H1 (cell line): ENCODE measurements at regions of chr19 and their contacts with region 1.

Region 1: DNA sequence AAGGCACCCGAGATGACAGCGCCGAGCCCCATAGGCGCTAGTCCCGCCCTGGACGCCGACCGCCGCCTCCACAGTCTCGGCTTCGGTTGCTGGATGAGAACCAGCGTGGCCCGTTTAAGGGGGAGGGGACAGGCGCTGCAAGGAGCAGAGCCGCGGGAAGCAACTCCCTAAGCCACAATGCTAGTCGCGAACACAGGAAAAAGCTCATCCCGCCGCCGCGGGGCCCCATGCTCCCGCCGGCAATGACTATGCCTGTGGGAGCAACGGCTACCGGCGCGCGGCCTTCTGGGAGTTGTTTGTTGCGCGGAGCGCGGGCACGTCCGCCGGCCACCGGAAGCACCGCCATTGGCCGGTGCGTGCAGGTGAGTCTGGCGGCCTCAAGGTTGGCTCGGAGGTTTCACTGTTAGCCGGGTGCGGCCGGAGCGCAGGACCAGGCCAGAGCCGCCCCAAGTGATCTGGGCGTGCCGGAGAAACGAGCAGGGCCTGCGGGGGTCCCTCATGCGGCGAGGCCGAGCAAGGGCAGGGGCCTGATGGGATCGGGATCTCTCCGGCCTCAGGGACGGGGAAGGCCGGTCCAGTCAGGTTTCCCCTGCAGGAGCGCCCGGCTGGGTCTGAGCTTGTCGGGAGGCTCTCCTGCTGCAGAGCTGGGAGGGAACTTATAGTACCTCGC is at the start of gene ZNF544:
- DNase-seq: peak in 1 of 2 experiments; percentile 88
- H3K4me3 ChIP-seq: peak within 1 kb of the TSS; percentile 81 to 96 (median 90)
- H3K27ac ChIP-seq: peak within 1 kb of the TSS; percentile 97
- H3K4me1 ChIP-seq: peaks cover 3 to 14% (median 5%) of the 10 kb centered on the region in 4 experiments
- H3K27me3 ChIP-seq: no peaks in the 10 kb centered on the region
- CTCF ChIP-seq: peak in 2 of 3 experiments; percentile 1; a peak in 2 of 4 replicates
- EP300 ChIP-seq: no peak
- POLR2A ChIP-seq: peak; percentile 87 to 90
- RAD21 ChIP-seq: no peak
- total RNA-seq, gene ZNF544: 54.5 and 60.8 TPM in 2 replicates

Region 2: GRCh38 chr19:58182989-58183816 is 45.5 kb before region 1 on chr19 and contains the start of gene ZNF274:
- CTCF ChIA-PET with region 1: no interaction called
- POLR2A ChIA-PET with region 1: interaction called, 25 read pairs
- DNase-seq: peak; percentile 84 to 97
- H3K4me3 ChIP-seq: peak within 1 kb of the TSS; percentile 94 to 97 (median 96)
- H3K27ac ChIP-seq: peak within 1 kb of the TSS; percentile 99
- H3K4me1 ChIP-seq: no peaks in the 10 kb centered on the region; a peak in 1 of 7 replicates
- H3K27me3 ChIP-seq: no peaks in the 10 kb centered on the region
- CTCF ChIP-seq: no peak
- EP300 ChIP-seq: no peak
- POLR2A ChIP-seq: peak; percentile 87 to 96
- RAD21 ChIP-seq: no peak
- total RNA-seq, gene ZNF274: 25.1 and 27.7 TPM in 2 replicates

Region 3: DNA sequence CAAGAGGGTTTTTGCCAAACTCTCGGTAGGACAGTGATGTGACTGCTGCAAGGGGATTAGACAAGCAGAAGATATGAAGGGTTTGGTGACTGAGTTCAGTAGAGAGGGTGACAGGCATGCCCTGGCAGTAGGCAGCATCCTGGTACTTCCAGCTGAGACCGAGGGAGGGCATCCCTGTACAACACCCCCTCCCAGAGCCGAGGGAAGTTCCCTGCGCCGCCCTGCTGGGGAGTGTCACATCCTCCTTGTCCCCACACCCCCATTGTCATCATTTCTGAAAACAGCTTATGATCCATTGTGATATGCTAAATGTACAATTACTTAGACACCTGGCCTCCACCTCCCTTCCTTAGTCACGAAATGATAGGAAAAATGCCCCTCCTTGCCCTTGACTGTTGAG is 14.6 kb after region 1 on chr19:
- CTCF ChIA-PET with region 1: interaction called, 9 read pairs
- POLR2A ChIA-PET with region 1: interaction called, 52 read pairs
- DNase-seq: no peak
- H3K4me3 ChIP-seq: no peak overlapping the region
- H3K27ac ChIP-seq: no peak overlapping the region
- H3K4me1 ChIP-seq: no peaks in the 10 kb centered on the region
- H3K27me3 ChIP-seq: no peaks in the 10 kb centered on the region
- CTCF ChIP-seq: no peak
- EP300 ChIP-seq: no peak
- POLR2A ChIP-seq: no peak; a peak in 1 of 3 replicates
- RAD21 ChIP-seq: no peak

Region 4: GRCh38 chr19:58261968-58262921 is 33.5 kb after region 1 on chr19:
- CTCF ChIA-PET with region 1: no interaction called
- POLR2A ChIA-PET with region 1: interaction called, 38 read pairs
- DNase-seq: no peak
- H3K4me3 ChIP-seq: peak overlapping the region in 3 of 4 experiments; percentile 10 to 36 (median 19); a peak in 4 of 8 replicates
- H3K27ac ChIP-seq: no peak overlapping the region
- H3K4me1 ChIP-seq: no peaks in the 10 kb centered on the region
- H3K27me3 ChIP-seq: no peaks in the 10 kb centered on the region
- CTCF ChIP-seq: no peak
- EP300 ChIP-seq: no peak
- POLR2A ChIP-seq: peak in 1 of 2 experiments; percentile 45; a peak in 1 of 3 replicates
- RAD21 ChIP-seq: no peak

Region 5: DNA sequence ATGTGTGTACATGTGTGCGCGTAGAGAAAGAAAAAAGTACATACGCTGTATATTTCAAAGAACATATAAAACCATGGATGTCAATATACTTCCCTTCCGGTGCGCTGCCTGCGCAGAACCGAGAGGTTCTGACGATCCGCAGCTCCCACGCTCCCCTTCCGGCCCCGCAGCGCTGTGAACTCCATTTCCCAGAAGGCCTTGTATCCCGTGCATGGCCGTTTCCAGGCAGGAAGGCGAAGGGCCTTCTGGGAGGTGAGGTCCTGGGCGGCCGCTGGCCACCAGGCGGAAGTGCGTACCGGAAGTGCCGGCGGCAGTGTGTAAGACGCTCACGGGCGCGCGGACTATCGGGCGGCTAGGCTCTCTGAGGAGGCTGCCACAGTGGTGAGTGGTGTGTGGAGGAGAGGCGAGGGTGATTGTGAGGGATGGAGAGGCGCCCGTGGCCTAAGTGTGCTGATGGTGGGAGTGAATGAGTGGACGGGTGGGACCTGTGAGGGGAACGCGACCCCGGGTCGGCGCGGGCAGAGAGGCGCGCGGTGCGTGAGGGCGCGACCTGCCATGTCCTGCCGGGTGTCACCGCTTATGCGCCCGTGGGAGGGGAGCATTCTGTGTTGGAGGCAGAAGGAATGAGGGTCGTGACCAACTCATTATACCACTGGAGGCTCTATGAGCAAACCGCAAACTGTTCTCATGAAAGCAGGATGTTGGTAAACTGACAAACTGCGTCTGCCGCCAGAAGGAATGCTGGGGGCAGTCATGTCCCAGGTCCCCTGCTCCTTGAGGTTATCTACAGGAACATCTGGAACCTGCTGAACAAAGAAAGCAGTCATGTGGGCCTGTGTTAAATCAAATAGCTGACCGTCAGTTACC is 76.6 kb after region 1 on chr19 and contains the start of gene ERVK3-1:
- CTCF ChIA-PET with region 1: interaction called, 3 read pairs
- POLR2A ChIA-PET with region 1: interaction called, 13 read pairs
- DNase-seq: peak; percentile 83 to 91
- H3K4me3 ChIP-seq: peak within 1 kb of the TSS; percentile 87 to 99 (median 98)
- H3K27ac ChIP-seq: peak within 1 kb of the TSS; percentile 63
- H3K4me1 ChIP-seq: peaks cover 0 to 3% (median 1%) of the 10 kb centered on the region in 4 experiments; a peak in 3 of 7 replicates
- H3K27me3 ChIP-seq: no peaks in the 10 kb centered on the region
- CTCF ChIP-seq: no peak
- EP300 ChIP-seq: 0 out of 3 replicates have a peak, but pooled peaks of 1 of the 2 experiments have one; percentile 40
- POLR2A ChIP-seq: peak in 1 of 2 experiments; percentile 71; a peak in 2 of 3 replicates
- RAD21 ChIP-seq: no peak
- total RNA-seq, gene ERVK3-1: 30.6 and 31.5 TPM in 2 replicates

Region 6: GRCh38 chr19:58326914-58327726 is 98.4 kb after region 1 on chr19 and contains the start of gene ZSCAN22:
- CTCF ChIA-PET with region 1: interaction called, 3 read pairs
- POLR2A ChIA-PET with region 1: interaction called, 12 read pairs
- DNase-seq: peak; percentile 72 to 94
- H3K4me3 ChIP-seq: peak within 1 kb of the TSS; percentile 72 to 98 (median 88)
- H3K27ac ChIP-seq: peak within 1 kb of the TSS; percentile 65; the same call in 1 of the 2 replicates
- H3K4me1 ChIP-seq: no peaks in the 10 kb centered on the region
- H3K27me3 ChIP-seq: 0 out of 7 replicates have a peak, but pooled peaks cover 0 to 3% (median 0%) of the 10 kb centered on the region in 4 experiments
- CTCF ChIP-seq: no peak
- EP300 ChIP-seq: no peak
- POLR2A ChIP-seq: no peak; a peak in 1 of 3 replicates
- RAD21 ChIP-seq: no peak
- total RNA-seq, gene ZSCAN22: 3.1 and 3.2 TPM in 2 replicates